ENCODE measurements at regions of chr7 and their contacts with region 1.

Region 1: DNA sequence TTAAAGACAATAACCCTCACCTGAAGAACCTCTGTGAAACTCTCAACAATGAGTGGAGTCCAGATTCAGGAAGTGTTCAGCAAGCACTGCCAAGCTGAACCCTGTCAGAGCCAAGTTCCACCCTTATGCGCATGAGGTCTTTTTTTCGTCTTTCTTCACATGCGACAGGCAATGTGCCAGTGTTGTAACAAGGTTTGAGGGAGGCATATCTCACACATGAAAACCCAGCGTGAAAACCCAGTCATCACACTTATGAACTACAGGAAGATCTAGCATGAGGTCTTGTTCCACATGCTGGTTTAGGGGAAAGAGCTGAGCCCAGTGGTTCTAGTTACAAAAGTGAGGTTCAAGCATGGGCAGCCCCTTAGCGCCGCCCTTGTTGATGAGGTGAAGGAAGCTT is 49.7 kb downstream of the RABGEF1 start:
- DNase-seq: no peak
- H3K4me3 Mint-ChIP-seq: no peak overlapping the region
- H3K27ac Mint-ChIP-seq: no peak overlapping the region
- H3K4me1 Mint-ChIP-seq: no peaks in the 10 kb centered on the region
- H3K27me3 Mint-ChIP-seq: no peaks in the 10 kb centered on the region

Region 2: GRCh38 chr7:66564045-66564444 is 226.2 kb before region 1 on chr7:
- intact Hi-C with region 1: loop called (anchors 1 kb)
- DNase-seq: no peak
- H3K4me3 Mint-ChIP-seq: no peak overlapping the region
- H3K27ac Mint-ChIP-seq: no peak overlapping the region
- H3K4me1 Mint-ChIP-seq: peaks cover 5% of the 10 kb centered on the region
- H3K27me3 Mint-ChIP-seq: no peaks in the 10 kb centered on the region